ENCODE measurements at regions of chr1 and their contacts with region 1.

Region 1: DNA sequence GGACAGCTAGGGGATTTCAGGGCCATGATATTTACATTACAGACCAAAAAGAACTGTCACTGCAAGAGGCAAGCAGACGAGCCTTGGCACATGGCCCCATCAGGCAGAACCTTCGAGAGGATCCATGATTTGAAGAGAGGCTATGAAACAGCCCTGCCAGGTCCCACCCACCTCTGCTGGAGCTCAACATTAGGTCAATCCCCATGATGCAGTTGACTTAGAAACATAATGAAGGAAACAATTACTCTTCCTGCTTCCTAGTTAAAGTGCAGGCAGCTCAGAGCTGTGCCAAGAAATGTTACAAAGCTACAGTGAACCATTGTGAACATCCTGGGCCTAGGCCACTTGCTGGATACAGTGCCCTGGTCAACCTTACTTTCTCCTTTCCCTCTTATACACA is 41.7 kb upstream of the PTCH2 start:
- DNase-seq: peak in 1 of 2 donors; percentile 40
- ATAC-seq: peak; percentile 64 to 87 (median 79)
- H3K4me3 ChIP-seq: no peak overlapping the region
- H3K27ac ChIP-seq: peak overlapping the region in 3 of 10 donors; percentile 21 to 71 (median 30)
- H3K4me1 ChIP-seq: peaks cover 0 to 24% (median 3%) of the 10 kb centered on the region in 9 donors
- H3K27me3 ChIP-seq: no peaks in the 10 kb centered on the region
- CTCF ChIP-seq: no peak

Region 2: GRCh38 chr1:44947063-44947773 is 62.5 kb after region 1 on chr1:
- intact Hi-C with region 1: loop called in 1 of 10 experiments (anchors 5 kb)
- DNase-seq: peak; percentile 13 to 56
- ATAC-seq: peak; percentile 80 to 95 (median 88)
- H3K4me3 ChIP-seq: no peak overlapping the region
- H3K27ac ChIP-seq: peak overlapping the region in 9 of 10 donors; percentile 31 to 86 (median 58)
- H3K4me1 ChIP-seq: peaks cover 0 to 54% (median 29%) of the 10 kb centered on the region in 9 donors
- H3K27me3 ChIP-seq: no peaks in the 10 kb centered on the region
- CTCF ChIP-seq: no peak